Motor neuron (in vitro differentiated cells): ENCODE measurements at regions of chr11 and their contacts with region 1.

Region 1: GRCh38 chr11:92941676-92942571 is 27.5 kb upstream of the MTNR1B start:
- ATAC-seq: peak in 4 of 8 experiments; percentile 46 to 62 (median 60)
- H3K4me3 ChIP-seq: no peak overlapping the region
- H3K27ac ChIP-seq: no peak overlapping the region
- H3K4me1 ChIP-seq: no peaks in the 10 kb centered on the region

Region 2: DNA sequence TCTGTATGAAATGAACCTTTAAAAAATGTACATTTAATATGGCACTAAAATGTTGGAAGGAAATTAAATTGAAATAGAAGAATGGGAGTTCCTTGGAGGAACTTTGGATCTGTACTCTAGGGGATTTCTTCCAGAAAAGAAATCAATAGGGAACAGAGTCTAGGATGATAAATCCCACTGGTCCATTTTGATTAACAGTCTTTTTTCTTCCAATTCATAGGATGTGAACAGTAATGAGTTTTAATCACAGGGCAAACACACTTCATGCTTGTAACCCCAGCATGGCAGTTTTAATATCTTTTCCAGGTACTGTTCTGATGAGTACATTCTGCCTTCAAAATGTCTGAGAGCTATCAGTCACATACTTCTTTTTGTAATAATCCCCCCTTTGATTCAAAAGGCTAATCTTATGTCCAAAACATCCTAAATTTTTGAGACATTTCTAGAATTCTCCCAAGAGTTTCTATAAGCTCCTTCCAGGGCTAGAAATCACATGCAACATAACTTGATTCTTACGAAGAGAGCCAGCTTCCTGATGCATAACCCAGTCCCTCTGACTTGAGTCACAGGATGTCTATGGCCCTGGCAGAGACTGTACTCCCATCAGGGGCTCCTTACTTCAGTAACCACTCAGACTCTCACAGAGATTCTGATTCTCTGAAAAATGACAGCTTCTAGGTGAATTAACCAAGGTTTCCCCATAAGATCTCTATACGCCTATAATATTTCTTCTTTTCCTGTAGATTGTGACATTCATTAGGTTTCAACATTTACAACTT is 143.0 kb after region 1 on chr11:
- in situ Hi-C with region 1: no loop called
- ATAC-seq: peak in 6 of 8 experiments; percentile 8 to 58 (median 34)
- H3K4me3 ChIP-seq: no peak overlapping the region
- H3K27ac ChIP-seq: no peak overlapping the region
- H3K4me1 ChIP-seq: peaks cover 8 to 15% of the 10 kb centered on the region in 2 donors

Region 3: GRCh38 chr11:93169950-93170561 is 228.1 kb after region 1 on chr11:
- in situ Hi-C with region 1: loop called in 2 of 9 experiments (anchors 25 kb)
- ATAC-seq: peak in 3 of 8 experiments; percentile 41 to 60 (median 48)
- H3K4me3 ChIP-seq: no peak overlapping the region
- H3K27ac ChIP-seq: no peak overlapping the region
- H3K4me1 ChIP-seq: no peaks in the 10 kb centered on the region

Region 4: GRCh38 chr11:93219440-93219839 is 277.5 kb after region 1 on chr11:
- in situ Hi-C with region 1: loop called in 2 of 9 experiments (anchors 25 kb)
- ATAC-seq: no peak
- H3K4me3 ChIP-seq: no peak overlapping the region
- H3K27ac ChIP-seq: no peak overlapping the region
- H3K4me1 ChIP-seq: peaks cover 0 to 2% of the 10 kb centered on the region in 2 donors

Region 5: GRCh38 chr11:93498641-93499040 is 556.7 kb after region 1 on chr11:
- in situ Hi-C with region 1: no loop called
- ATAC-seq: no peak
- H3K4me3 ChIP-seq: no peak overlapping the region
- H3K27ac ChIP-seq: no peak overlapping the region
- H3K4me1 ChIP-seq: no peaks in the 10 kb centered on the region

Region 6: GRCh38 chr11:93652161-93652597 is 710.3 kb after region 1 on chr11:
- in situ Hi-C with region 1: loop called in 1 of 9 experiments (anchors 25 kb)
- ATAC-seq: peak in 2 of 8 experiments; percentile 20 to 29
- H3K4me3 ChIP-seq: no peak overlapping the region
- H3K27ac ChIP-seq: no peak overlapping the region
- H3K4me1 ChIP-seq: no peaks in the 10 kb centered on the region